ENCODE measurements at regions of chr6 and their contacts with region 1.

Region 1: DNA sequence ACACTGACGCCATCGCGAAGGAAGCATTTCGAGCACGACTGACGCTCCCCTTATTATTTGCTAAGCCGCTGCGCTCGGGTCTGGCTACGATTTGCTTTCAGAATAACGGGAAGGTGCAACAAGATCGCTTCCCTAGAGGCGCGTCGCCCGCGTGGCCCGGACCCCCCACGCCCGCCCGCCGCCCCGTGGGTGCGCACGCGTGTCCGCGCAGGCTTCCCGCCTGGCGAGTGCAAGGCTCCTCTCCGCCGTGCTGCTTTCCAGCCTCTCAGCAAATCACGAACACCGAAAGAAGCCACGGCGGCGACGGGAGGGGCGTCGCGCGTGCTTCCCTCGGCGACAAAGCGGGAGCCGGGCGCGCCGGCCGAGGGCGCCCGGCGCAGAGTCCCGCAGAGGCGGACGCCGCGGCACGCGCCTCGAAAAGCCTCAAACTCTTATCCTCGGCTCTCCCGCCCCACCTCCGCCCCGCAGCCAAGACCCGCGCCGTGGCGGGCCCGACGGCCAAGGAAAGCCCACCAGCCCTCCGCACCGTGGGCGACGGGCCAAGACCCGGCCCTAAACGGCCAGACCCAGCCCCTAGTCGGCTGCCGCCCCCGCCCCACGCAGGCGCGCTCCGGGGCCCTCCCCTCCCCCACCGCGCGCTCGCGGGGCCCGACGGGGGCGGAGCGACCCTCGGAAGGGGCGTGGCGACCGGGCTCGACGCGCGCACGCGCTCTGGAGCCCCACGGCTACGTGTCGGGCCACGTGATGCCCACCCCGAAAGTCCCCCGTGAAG is 987 bp upstream of the QKI start:
- DNase-seq: peak; percentile 93
- H3K4me3 ChIP-seq: peak overlapping the region; percentile 64 to 92 (median 70)
- H3K27ac ChIP-seq: peak overlapping the region; percentile 85
- H3K4me1 ChIP-seq: peaks cover 20% of the 10 kb centered on the region
- H3K27me3 ChIP-seq: no peaks in the 10 kb centered on the region
- CTCF ChIP-seq: no peak
- POLR2A ChIP-seq: peak; percentile 1

Region 2: DNA sequence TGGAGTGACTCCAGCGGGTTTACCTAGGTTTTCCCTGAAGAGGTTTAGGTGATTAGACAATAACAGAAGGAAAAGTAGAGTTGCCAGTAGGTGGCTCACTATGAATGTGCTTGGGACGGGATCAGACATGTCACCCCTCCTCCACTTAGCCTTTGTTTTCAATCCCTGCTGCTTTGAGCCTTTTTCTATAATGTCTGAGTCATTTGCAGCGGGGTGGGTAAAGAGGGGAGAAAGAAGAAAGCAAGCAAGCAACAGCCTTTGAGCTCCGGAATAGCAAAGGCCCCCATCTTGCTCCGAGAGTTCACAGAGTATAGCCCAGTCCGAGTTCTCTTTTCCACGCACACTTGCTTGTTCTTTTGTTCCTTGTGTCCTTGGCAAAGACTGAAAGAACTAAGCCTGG is 556.6 kb before region 1 on chr6:
- CTCF ChIA-PET with region 1: no interaction called
- POLR2A ChIA-PET with region 1: no interaction called
- dilution Hi-C with region 1: no loop called
- intact Hi-C with region 1: loop called (anchors 2 kb)
- DNase-seq: peak; percentile 69
- H3K4me3 ChIP-seq: no peak overlapping the region
- H3K27ac ChIP-seq: no peak overlapping the region
- H3K4me1 ChIP-seq: no peaks in the 10 kb centered on the region
- H3K27me3 ChIP-seq: no peaks in the 10 kb centered on the region
- CTCF ChIP-seq: peak; percentile 19 to 45
- POLR2A ChIP-seq: no peak

Region 3: GRCh38 chr6:163284151-163284550 is 129.4 kb before region 1 on chr6:
- CTCF ChIA-PET with region 1: no interaction called
- POLR2A ChIA-PET with region 1: no interaction called
- dilution Hi-C with region 1: no loop called
- intact Hi-C with region 1: loop called (anchors 2 kb)
- DNase-seq: peak; percentile 66
- H3K4me3 ChIP-seq: no peak overlapping the region
- H3K27ac ChIP-seq: peak overlapping the region; percentile 50
- H3K4me1 ChIP-seq: peaks cover 20% of the 10 kb centered on the region
- H3K27me3 ChIP-seq: no peaks in the 10 kb centered on the region
- CTCF ChIP-seq: no peak
- POLR2A ChIP-seq: peak; percentile 34

Region 4: GRCh38 chr6:163367497-163368183 is 45.9 kb before region 1 on chr6:
- CTCF ChIA-PET with region 1: no interaction called
- POLR2A ChIA-PET with region 1: no interaction called
- dilution Hi-C with region 1: no loop called
- intact Hi-C with region 1: loop called (anchors 1 kb)
- DNase-seq: peak; percentile 52
- H3K4me3 ChIP-seq: no peak overlapping the region
- H3K27ac ChIP-seq: peak overlapping the region; percentile 46
- H3K4me1 ChIP-seq: peaks cover 15% of the 10 kb centered on the region
- H3K27me3 ChIP-seq: no peaks in the 10 kb centered on the region
- CTCF ChIP-seq: no peak
- POLR2A ChIP-seq: no peak

Region 5: DNA sequence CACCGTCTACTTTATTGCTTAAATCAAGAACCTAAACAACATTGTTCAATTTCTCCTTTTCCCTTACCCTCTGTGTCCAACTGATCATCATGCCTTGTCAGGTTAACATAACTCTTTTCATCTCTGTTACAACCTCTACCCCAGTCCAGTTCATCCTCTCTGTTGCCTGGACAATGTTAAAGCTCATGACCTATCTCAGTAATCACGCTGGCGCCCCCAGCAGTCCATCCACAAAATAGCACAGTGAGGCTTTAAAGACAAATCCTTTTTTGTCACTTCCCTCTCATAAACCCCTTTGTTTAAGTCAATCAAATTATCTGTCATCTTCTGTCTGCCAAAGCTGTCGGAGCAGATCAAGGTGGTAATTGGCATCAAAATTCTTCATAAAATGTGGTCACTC is 141.1 kb after region 1 on chr6:
- CTCF ChIA-PET with region 1: interaction called, 17 read pairs
- POLR2A ChIA-PET with region 1: no interaction called
- dilution Hi-C with region 1: no loop called
- intact Hi-C with region 1: loop called (anchors 1 kb)
- DNase-seq: peak; percentile 61
- H3K4me3 ChIP-seq: no peak overlapping the region
- H3K27ac ChIP-seq: no peak overlapping the region
- H3K4me1 ChIP-seq: no peaks in the 10 kb centered on the region
- H3K27me3 ChIP-seq: no peaks in the 10 kb centered on the region
- CTCF ChIP-seq: peak; percentile 64 to 72
- POLR2A ChIP-seq: no peak

Region 6: DNA sequence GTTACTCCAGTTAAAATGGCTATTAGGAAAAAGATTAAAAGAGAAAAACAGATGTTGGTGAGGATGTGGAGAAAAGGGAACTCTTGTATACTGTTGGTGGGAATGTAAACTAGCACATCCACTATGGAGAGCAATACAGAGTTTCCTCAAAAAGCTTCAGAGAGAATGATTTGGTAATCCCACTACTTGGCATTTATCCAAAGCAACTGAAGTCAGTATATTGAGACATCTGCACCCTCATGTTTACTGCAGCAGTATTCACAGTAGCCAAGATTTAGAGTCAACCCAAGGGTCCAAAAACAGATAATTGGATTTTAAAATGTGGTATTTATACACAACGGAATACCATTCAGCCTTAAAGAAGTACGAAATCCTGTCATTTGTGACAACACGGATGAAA is 470.5 kb after region 1 on chr6:
- CTCF ChIA-PET with region 1: no interaction called
- POLR2A ChIA-PET with region 1: no interaction called
- dilution Hi-C with region 1: no loop called
- intact Hi-C with region 1: no loop called
- DNase-seq: no peak
- H3K4me3 ChIP-seq: no peak overlapping the region
- H3K27ac ChIP-seq: no peak overlapping the region
- H3K4me1 ChIP-seq: no peaks in the 10 kb centered on the region
- H3K27me3 ChIP-seq: no peaks in the 10 kb centered on the region
- CTCF ChIP-seq: no peak
- POLR2A ChIP-seq: no peak

Region 7: DNA sequence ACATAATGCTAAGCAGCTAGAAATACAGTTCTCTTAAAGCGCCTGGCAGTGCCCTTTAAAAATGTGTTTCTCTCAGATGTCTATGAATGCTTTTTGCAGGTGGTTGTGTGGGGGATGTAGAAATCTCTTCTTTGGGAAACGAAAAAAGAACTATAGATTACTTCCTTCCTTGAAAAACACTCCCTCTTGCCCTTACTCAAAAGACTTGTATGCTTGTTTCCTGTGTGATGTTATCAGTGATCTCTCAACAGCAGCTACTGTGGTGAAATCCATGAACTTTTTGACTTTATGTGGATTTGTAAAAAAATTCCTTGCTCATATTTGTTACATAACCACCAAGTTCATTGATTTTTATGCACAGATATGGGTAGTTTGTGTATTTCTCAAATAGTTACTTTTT is 917.5 kb after region 1 on chr6:
- CTCF ChIA-PET with region 1: no interaction called
- POLR2A ChIA-PET with region 1: no interaction called
- dilution Hi-C with region 1: no loop called
- intact Hi-C with region 1: loop called (anchors 5 kb)
- DNase-seq: peak; percentile 54
- H3K4me3 ChIP-seq: no peak overlapping the region
- H3K27ac ChIP-seq: no peak overlapping the region
- H3K4me1 ChIP-seq: peaks cover 12% of the 10 kb centered on the region
- H3K27me3 ChIP-seq: no peaks in the 10 kb centered on the region
- CTCF ChIP-seq: no peak
- POLR2A ChIP-seq: no peak

Measured in endothelial cell of umbilical vein (primary cell).